ENCODE measurements at regions of chr12 and their contacts with region 1.

Region 1: GRCh38 chr12:57452937-57453509 is 2.1 kb upstream of the INHBE start:
- DNase-seq: peak in 1 of 2 experiments; percentile 94
- H3K4me3 ChIP-seq: no peak overlapping the region
- H3K27ac ChIP-seq: no peak overlapping the region
- H3K4me1 ChIP-seq: peaks cover 0 to 28% (median 19%) of the 10 kb centered on the region in 4 experiments; a peak in 6 of 7 replicates
- H3K27me3 ChIP-seq: no peaks in the 10 kb centered on the region
- CTCF ChIP-seq: peak in 2 of 3 experiments; percentile 97 to 99; a peak in 3 of 4 replicates
- EP300 ChIP-seq: no peak
- POLR2A ChIP-seq: no peak
- RAD21 ChIP-seq: peak; percentile 98 to 99

Region 2: DNA sequence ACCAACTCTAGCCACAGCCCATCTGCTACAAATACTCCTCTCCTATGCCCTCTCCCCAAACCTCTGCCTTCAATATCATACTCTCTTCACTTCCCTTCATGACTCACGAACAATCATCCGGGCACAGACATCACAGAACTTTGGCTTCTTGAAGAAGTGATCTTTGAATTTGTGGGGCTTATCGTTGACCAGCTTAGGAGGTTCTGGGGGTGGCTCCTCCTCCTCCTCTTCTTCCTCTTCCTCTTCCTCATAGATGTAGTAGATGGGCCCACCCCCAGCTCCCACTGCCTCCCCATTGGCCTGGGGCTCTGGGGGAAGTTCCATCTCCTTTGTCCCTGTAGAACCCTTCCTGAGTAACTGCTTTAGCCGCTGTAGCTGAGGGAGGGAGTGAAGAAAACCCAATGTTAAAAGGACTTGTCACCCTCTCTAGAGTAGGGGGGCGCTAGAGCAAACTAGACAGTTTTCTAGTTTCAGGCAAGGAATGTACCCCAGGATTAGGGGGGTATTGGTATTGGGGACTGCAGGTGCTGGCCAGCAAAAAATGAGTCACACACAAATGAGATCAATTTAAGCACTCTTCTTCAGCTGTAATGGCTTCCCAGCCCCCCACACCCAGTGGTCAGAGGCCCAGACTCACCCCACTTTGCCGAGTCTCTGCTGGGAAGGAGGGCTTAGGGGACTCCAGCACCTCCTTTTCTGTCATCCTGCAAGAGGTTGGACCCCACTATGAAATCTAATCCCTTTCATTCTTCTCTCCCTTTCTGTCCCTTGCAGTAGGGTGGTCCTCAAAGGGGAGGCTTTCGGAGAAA is 203.9 kb before region 1 on chr12:
- CTCF ChIA-PET with region 1: interaction called, 225 read pairs
- POLR2A ChIA-PET with region 1: interaction called, 30 read pairs
- DNase-seq: no peak
- H3K4me3 ChIP-seq: no peak overlapping the region
- H3K27ac ChIP-seq: no peak overlapping the region
- H3K4me1 ChIP-seq: peaks cover 2 to 10% (median 6%) of the 10 kb centered on the region in 4 experiments
- H3K27me3 ChIP-seq: peaks cover 0 to 7% (median 6%) of the 10 kb centered on the region in 4 experiments; a peak in 4 of 7 replicates
- CTCF ChIP-seq: no peak; a peak in 1 of 4 replicates
- EP300 ChIP-seq: no peak
- POLR2A ChIP-seq: no peak
- RAD21 ChIP-seq: no peak

Region 3: DNA sequence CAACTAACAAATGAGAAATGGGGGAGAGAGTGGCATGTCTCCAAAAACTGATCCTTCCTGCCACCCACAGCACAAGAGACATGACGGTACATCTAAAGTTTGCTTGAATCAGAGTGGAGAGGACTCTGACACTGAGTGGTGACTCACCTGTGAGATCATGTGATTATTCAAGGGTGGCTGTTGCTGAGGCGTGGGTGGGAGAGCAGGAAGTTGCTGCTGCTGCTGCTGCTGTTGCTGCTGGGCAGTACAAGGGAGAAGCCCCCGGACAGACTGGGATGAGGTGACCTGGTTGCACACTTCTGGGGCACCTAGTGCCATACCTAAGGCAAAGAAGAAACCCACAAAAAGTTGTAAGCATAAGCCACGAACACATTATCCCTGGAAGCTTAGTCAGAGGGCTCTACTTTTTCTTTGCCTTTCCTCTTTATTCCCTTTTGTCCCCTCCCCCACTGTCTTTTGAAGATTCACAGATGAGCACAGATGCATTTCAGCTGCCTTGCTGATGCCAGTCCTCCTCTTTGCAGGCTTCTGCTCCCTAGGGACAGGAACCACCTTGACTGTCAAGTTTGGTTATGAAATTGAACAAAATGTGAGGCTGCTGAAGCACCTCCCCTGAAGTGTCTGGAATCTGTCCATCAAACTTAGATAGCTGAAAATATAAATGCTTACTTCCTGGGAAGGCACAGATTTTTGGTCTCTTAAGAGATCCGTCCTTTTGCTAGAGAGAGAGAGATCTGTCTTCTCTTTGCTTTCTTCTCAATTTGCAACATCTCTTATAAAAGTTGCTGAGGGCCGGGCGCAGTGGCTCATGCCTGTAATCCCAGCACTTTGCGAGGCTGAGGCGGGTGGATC is 172.6 kb before region 1 on chr12:
- CTCF ChIA-PET with region 1: interaction called, 25 read pairs
- POLR2A ChIA-PET with region 1: interaction called, 4 read pairs
- DNase-seq: no peak
- H3K4me3 ChIP-seq: no peak overlapping the region
- H3K27ac ChIP-seq: no peak overlapping the region
- H3K4me1 ChIP-seq: 0 out of 7 replicates have a peak, but pooled peaks cover 0 to 2% (median 0%) of the 10 kb centered on the region in 4 experiments
- H3K27me3 ChIP-seq: no peaks in the 10 kb centered on the region
- CTCF ChIP-seq: no peak
- EP300 ChIP-seq: no peak
- POLR2A ChIP-seq: no peak
- RAD21 ChIP-seq: no peak

Region 4: GRCh38 chr12:57332646-57333312 is 120.2 kb before region 1 on chr12:
- CTCF ChIA-PET with region 1: interaction called, 14 read pairs
- POLR2A ChIA-PET with region 1: interaction called, 4 read pairs
- DNase-seq: no peak
- H3K4me3 ChIP-seq: no peak overlapping the region
- H3K27ac ChIP-seq: no peak overlapping the region
- H3K4me1 ChIP-seq: no peaks in the 10 kb centered on the region
- H3K27me3 ChIP-seq: no peaks in the 10 kb centered on the region
- CTCF ChIP-seq: no peak
- EP300 ChIP-seq: no peak
- POLR2A ChIP-seq: no peak
- RAD21 ChIP-seq: no peak

Region 5: DNA sequence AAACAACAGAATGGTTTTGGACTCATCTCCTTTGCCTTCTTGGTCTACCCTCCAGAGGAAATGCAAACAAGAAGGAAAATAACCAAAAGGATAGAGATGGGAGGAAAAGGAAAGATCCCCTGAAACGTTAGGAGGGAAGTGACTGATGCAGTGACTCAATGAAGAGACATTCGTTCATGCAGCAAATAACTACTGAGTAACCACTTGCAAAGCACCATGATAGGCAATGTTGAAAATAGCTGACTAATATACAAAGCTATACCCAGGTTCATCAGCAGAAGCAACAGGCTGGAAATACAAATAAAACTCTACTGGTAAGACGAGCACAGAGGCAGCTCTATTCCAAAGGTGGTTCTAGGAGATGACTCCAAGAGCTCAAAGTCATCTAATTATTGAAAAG is 64.0 kb before region 1 on chr12:
- CTCF ChIA-PET with region 1: interaction called, 11 read pairs
- POLR2A ChIA-PET with region 1: interaction called, 3 read pairs
- DNase-seq: no peak
- H3K4me3 ChIP-seq: no peak overlapping the region
- H3K27ac ChIP-seq: no peak overlapping the region
- H3K4me1 ChIP-seq: peaks cover 0 to 5% (median 0%) of the 10 kb centered on the region in 4 experiments; a peak in 1 of 7 replicates
- H3K27me3 ChIP-seq: no peaks in the 10 kb centered on the region
- CTCF ChIP-seq: no peak
- EP300 ChIP-seq: no peak
- POLR2A ChIP-seq: no peak
- RAD21 ChIP-seq: no peak

Region 6: GRCh38 chr12:57416039-57416996 is 36.7 kb before region 1 on chr12:
- CTCF ChIA-PET with region 1: interaction called, 18 read pairs
- POLR2A ChIA-PET with region 1: interaction called, 7 read pairs
- DNase-seq: no peak
- H3K4me3 ChIP-seq: no peak overlapping the region
- H3K27ac ChIP-seq: no peak overlapping the region
- H3K4me1 ChIP-seq: no peaks in the 10 kb centered on the region; a peak in 1 of 7 replicates
- H3K27me3 ChIP-seq: no peaks in the 10 kb centered on the region
- CTCF ChIP-seq: no peak
- EP300 ChIP-seq: no peak
- POLR2A ChIP-seq: no peak
- RAD21 ChIP-seq: no peak

Region 7: GRCh38 chr12:57546438-57547383 is 93.7 kb after region 1 on chr12 and contains the start of gene DCTN2:
- CTCF ChIA-PET with region 1: no interaction called
- POLR2A ChIA-PET with region 1: no interaction called
- DNase-seq: peak; percentile 83 to 91
- H3K4me3 ChIP-seq: peak within 1 kb of the TSS; percentile 63 to 90 (median 81)
- H3K27ac ChIP-seq: peak within 1 kb of the TSS; percentile 44; the same call in 1 of the 2 replicates
- H3K4me1 ChIP-seq: peaks cover 6 to 18% (median 10%) of the 10 kb centered on the region in 4 experiments; a peak in 6 of 7 replicates
- H3K27me3 ChIP-seq: peaks cover 0 to 5% (median 3%) of the 10 kb centered on the region in 4 experiments; a peak in 2 of 7 replicates
- CTCF ChIP-seq: peak in 1 of 3 experiments; percentile 23; a peak in 1 of 4 replicates
- EP300 ChIP-seq: no peak
- POLR2A ChIP-seq: no peak; a peak in 1 of 3 replicates
- RAD21 ChIP-seq: no peak
- total RNA-seq, gene DCTN2: 89.3 and 90.3 TPM in 2 replicates